ENCODE measurements at regions of chr1 and their contacts with region 1.

Region 1: GRCh38 chr1:159077120-159077961 is 775 bp upstream of the AIM2 start:
- DNase-seq: peak; percentile 100
- ATAC-seq: peak; percentile 86
- H3K4me3 Mint-ChIP-seq: peak overlapping the region; percentile 76
- H3K27ac Mint-ChIP-seq: peak overlapping the region; percentile 97
- H3K4me1 Mint-ChIP-seq: peaks cover 44% of the 10 kb centered on the region
- H3K27me3 Mint-ChIP-seq: peaks cover 3% of the 10 kb centered on the region

Region 2: GRCh38 chr1:159009704-159010361 is 67.5 kb before region 1 on chr1 and contains the start of gene IFI16:
- CTCF ChIA-PET with region 1: interaction called, 16 read pairs
- DNase-seq: peak; percentile 83
- ATAC-seq: peak; percentile 68
- H3K4me3 Mint-ChIP-seq: peak within 1 kb of the TSS; percentile 90
- H3K27ac Mint-ChIP-seq: peak within 1 kb of the TSS; percentile 98
- H3K4me1 Mint-ChIP-seq: peaks cover 46% of the 10 kb centered on the region
- H3K27me3 Mint-ChIP-seq: no peaks in the 10 kb centered on the region
- total RNA-seq, gene IFI16: 388 to 393 TPM

Region 3: GRCh38 chr1:159089184-159089791 is 11.9 kb after region 1 on chr1:
- CTCF ChIA-PET with region 1: interaction called, 39 read pairs
- DNase-seq: no peak
- ATAC-seq: no peak
- H3K4me3 Mint-ChIP-seq: no peak overlapping the region
- H3K27ac Mint-ChIP-seq: no peak overlapping the region
- H3K4me1 Mint-ChIP-seq: peaks cover 43% of the 10 kb centered on the region
- H3K27me3 Mint-ChIP-seq: no peaks in the 10 kb centered on the region

Region 4: DNA sequence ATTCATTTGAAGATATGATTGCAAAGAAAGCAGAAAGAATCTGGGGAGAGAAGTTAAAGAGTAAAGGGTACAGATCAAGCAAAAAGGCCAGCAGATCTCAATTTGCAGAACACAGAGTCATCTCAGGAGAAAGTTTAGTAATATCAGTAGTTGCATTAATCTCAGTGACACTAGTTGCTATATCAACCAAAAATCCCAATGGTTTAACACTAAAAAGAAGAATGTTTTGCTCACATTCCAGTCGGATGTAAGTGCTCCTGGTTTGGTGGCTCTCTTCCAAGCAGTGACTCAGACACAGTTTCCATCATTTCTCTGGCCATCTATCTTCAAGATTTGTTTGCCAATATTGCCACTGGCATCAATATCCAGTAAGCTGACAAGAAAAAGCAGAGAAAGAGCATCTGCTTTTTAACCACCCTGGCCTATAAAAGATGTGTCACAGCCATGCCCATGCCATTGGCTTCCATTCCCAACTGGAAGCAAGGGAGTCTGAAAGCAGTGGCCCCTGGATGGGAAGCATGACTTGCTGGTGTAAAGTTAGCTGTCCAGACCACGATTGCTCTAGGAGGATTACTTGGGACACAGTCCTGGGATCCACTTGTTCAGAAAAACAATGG is 44.8 kb after region 1 on chr1:
- CTCF ChIA-PET with region 1: no interaction called
- DNase-seq: no peak
- ATAC-seq: no peak
- H3K4me3 Mint-ChIP-seq: no peak overlapping the region
- H3K27ac Mint-ChIP-seq: no peak overlapping the region
- H3K4me1 Mint-ChIP-seq: peaks cover 14% of the 10 kb centered on the region
- H3K27me3 Mint-ChIP-seq: peaks cover 56% of the 10 kb centered on the region